Activated CD4-positive, alpha-beta memory T cell treated with anti-CD3 and anti-CD28 coated beads for 36 hours (primary cell): ENCODE measurements at regions of chr4 and their contacts with region 1.

Region 1: DNA sequence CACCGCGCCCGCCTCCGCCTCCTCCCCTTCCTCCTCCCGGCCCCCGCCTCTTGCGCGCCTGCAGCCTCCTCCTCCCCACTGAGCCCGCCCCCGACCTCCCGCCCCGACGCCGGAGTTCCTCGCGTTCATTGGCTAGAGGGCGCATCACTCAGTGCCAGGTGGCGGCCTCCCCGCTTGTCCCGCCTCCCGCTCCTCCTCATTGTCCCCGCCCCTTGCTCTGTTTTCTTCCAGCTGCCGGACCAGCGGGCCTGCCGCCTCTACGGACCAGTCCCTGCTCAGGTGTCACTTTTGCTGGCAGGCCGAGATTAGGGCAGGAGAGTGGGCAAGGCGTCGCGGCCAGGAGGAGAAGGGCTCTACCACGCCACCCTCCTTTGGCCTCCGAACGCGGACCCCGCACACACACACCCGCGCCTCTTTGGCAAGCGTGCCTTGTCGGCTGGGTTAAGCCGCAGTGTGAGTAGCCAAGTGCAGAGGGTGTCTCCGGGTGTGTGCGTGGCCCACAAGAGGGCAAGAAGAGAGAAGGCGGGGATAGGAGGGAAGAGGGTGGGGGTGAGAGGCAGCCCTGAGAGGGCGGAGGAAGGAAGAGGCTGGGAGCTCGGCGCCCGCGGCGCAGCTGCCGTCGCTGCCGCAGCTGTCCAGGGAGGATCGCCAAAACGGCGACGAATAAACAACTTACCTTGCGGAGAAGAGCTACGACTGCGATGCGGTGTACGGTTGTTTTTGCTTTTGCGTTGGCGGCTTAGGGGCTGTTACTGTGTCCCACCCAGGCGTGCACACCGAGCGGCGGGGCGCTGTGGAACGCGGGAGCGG is 436 bp upstream of the PPP3CA start:
- DNase-seq: peak; percentile 99
- H3K4me3 Mint-ChIP-seq: peak overlapping the region; percentile 95
- H3K27ac Mint-ChIP-seq: peak overlapping the region; percentile 88
- H3K4me1 Mint-ChIP-seq: peaks cover 31% of the 10 kb centered on the region
- H3K27me3 Mint-ChIP-seq: peaks cover 9% of the 10 kb centered on the region

Region 2: GRCh38 chr4:99949034-99949998 is 1398.4 kb before region 1 on chr4:
- CTCF ChIA-PET with region 1: no interaction called
- POLR2A ChIA-PET with region 1: no interaction called
- intact Hi-C with region 1: loop called (anchors 2 kb)
- DNase-seq: peak; percentile 95
- H3K4me3 Mint-ChIP-seq: no peak overlapping the region
- H3K27ac Mint-ChIP-seq: no peak overlapping the region
- H3K4me1 Mint-ChIP-seq: peaks cover 35% of the 10 kb centered on the region
- H3K27me3 Mint-ChIP-seq: no peaks in the 10 kb centered on the region

Region 3: GRCh38 chr4:100977746-100978397 is 369.9 kb before region 1 on chr4:
- CTCF ChIA-PET with region 1: no interaction called
- POLR2A ChIA-PET with region 1: no interaction called
- intact Hi-C with region 1: no loop called
- DNase-seq: no peak
- H3K4me3 Mint-ChIP-seq: no peak overlapping the region
- H3K27ac Mint-ChIP-seq: no peak overlapping the region
- H3K4me1 Mint-ChIP-seq: no peaks in the 10 kb centered on the region
- H3K27me3 Mint-ChIP-seq: no peaks in the 10 kb centered on the region

Region 4: GRCh38 chr4:101020956-101021355 is 326.8 kb before region 1 on chr4:
- CTCF ChIA-PET with region 1: no interaction called
- POLR2A ChIA-PET with region 1: no interaction called
- intact Hi-C with region 1: loop called (anchors 2 kb)
- DNase-seq: peak; percentile 13
- H3K4me3 Mint-ChIP-seq: peak overlapping the region; percentile 12
- H3K27ac Mint-ChIP-seq: peak overlapping the region; percentile 50
- H3K4me1 Mint-ChIP-seq: peaks cover 58% of the 10 kb centered on the region
- H3K27me3 Mint-ChIP-seq: no peaks in the 10 kb centered on the region

Region 5: DNA sequence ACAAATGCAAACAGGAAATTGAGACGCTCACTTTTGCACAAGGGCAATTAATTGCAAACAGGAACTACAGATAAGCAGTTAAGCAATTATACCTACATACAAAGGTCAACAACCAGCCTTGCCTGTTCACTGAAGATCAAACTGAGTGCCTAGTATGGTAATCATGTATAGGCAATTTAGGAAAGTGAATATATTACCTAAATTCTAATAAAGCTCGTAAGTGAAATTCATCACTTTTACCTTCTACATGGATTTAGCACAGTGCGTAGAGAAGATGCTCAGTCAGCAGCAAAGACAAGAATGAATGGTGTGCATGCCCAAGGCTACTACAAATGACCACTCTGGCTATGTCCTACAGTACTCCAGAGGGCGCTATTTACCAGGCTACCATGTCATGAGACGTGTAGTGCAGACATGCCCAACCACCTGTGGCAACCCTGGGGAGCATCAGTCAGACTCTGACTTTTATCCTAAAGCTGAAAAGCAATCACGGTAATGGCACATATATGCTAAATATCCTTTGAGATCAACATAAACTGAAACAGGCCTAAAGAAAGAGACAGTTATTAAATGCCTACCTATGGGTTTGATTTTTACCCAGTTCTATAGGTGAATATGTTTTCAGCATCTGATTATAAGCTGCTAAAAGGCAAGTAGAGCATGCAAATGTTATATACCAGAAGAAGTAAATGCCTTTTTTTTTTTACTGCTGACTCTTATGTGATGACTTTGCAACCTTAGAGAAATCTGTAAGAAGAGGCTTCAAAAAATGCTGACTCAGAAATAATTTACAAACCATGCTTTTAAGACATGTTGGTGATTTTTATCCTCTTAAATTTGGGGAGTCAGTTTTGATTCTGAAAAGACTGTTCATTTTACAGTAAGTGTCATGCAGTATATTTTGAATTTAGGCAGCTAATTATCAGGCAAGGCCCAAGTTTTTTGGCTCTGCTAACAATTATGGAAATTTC is 178.4 kb before region 1 on chr4:
- CTCF ChIA-PET with region 1: interaction called, 3 read pairs
- POLR2A ChIA-PET with region 1: no interaction called
- intact Hi-C with region 1: loop called (anchors 1 kb)
- DNase-seq: peak; percentile 69
- H3K4me3 Mint-ChIP-seq: no peak overlapping the region
- H3K27ac Mint-ChIP-seq: no peak overlapping the region
- H3K4me1 Mint-ChIP-seq: peaks cover 9% of the 10 kb centered on the region
- H3K27me3 Mint-ChIP-seq: no peaks in the 10 kb centered on the region

Region 6: GRCh38 chr4:101282076-101282844 is 65.5 kb before region 1 on chr4:
- CTCF ChIA-PET with region 1: no interaction called
- POLR2A ChIA-PET with region 1: no interaction called
- intact Hi-C with region 1: loop called (anchors 2 kb)
- DNase-seq: peak; percentile 67
- H3K4me3 Mint-ChIP-seq: no peak overlapping the region
- H3K27ac Mint-ChIP-seq: no peak overlapping the region
- H3K4me1 Mint-ChIP-seq: peaks cover 58% of the 10 kb centered on the region
- H3K27me3 Mint-ChIP-seq: no peaks in the 10 kb centered on the region

Region 7: GRCh38 chr4:101527188-101527587 is 179.4 kb after region 1 on chr4:
- CTCF ChIA-PET with region 1: interaction called, 3 read pairs
- POLR2A ChIA-PET with region 1: interaction called, 7 read pairs
- intact Hi-C with region 1: loop called (anchors 1 kb)
- DNase-seq: peak; percentile 87
- H3K4me3 Mint-ChIP-seq: peak overlapping the region; percentile 12
- H3K27ac Mint-ChIP-seq: peak overlapping the region; percentile 30
- H3K4me1 Mint-ChIP-seq: peaks cover 20% of the 10 kb centered on the region
- H3K27me3 Mint-ChIP-seq: peaks cover 38% of the 10 kb centered on the region

Region 8: GRCh38 chr4:102344954-102345794 is 997.4 kb after region 1 on chr4 and contains the start of gene SLC39A8:
- CTCF ChIA-PET with region 1: no interaction called
- POLR2A ChIA-PET with region 1: no interaction called
- intact Hi-C with region 1: loop called (anchors 1 kb)
- DNase-seq: peak; percentile 95
- H3K4me3 Mint-ChIP-seq: peak within 1 kb of the TSS; percentile 78
- H3K27ac Mint-ChIP-seq: peak within 1 kb of the TSS; percentile 96
- H3K4me1 Mint-ChIP-seq: peaks cover 43% of the 10 kb centered on the region
- H3K27me3 Mint-ChIP-seq: peaks cover 1% of the 10 kb centered on the region
- total RNA-seq, gene SLC39A8: 64.6 to 66.9 TPM